A673 (cell line): ENCODE measurements at regions of chr17 and their contacts with region 1.

Region 1: GRCh38 chr17:9768381-9768934 is 22.9 kb downstream of the DHRS7C start:
- DNase-seq: peak; percentile 72
- H3K4me3 ChIP-seq: no peak overlapping the region
- H3K27ac ChIP-seq: no peak overlapping the region
- H3K4me1 ChIP-seq: no peaks in the 10 kb centered on the region
- H3K27me3 ChIP-seq: peaks cover 19% of the 10 kb centered on the region
- CTCF ChIP-seq: peak; percentile 60

Region 2: DNA sequence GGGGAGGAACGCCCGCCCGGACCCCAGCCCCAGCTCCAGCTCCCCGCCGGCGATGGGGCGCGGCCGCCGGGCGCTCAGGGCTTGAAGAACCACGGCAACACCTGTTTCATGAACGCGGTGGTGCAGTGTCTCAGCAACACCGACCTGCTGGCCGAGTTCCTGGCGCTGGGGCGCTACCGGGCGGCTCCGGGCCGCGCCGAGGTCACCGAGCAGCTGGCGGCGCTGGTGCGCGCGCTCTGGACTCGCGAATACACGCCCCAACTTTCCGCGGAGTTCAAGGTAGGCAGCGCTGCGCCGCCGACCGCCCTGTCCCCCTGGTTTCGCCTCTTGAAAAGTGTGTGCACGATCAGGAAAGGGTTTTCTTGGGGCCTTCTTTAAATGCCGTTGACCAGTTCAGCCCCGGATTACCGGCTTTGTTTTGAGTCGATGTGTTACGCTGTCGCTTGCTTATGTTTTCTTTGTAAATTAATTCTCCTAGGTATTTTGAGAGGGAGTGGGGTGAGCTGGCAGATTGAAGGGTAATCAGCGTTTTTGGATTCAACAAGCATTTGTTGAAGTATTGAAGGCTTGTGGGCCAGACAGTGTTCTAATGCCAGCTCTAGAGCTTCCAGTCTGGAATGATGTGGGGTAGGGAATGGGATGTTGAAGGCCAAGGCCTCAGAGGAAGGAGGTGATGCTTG is 122.5 kb before region 1 on chr17:
- CTCF ChIA-PET with region 1: interaction called, 14 read pairs
- POLR2A ChIA-PET with region 1: no interaction called
- intact Hi-C with region 1: no loop called
- DNase-seq: no peak
- H3K4me3 ChIP-seq: peak overlapping the region; percentile 47
- H3K27ac ChIP-seq: no peak overlapping the region
- H3K4me1 ChIP-seq: no peaks in the 10 kb centered on the region
- H3K27me3 ChIP-seq: peaks cover 54% of the 10 kb centered on the region
- CTCF ChIP-seq: 0 out of 2 replicates have a peak, but pooled peaks have one; percentile 10